Breast epithelium (tissue), 4 donors: ENCODE measurements at regions of chr3 and their contacts with region 1.

Region 1: DNA sequence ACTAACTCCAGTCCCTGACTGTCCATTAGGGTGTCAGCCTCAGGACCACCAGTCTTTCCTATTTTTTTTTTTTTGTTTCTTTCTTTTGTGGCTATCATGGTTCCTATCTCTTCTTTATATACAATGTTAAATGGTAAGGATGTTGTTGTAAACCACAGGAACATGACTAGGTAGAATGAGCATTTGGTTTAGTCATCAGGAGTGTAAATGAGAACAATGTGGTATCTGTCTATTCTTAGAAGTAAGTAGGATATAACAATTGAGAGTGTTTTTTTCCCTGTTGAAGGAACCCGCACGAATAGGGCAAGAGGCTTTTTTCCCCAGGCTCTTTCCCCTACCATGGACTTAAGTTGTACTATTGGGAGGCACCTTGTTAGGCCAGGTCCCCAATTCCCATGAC is 880.3 kb upstream of the GBE1 start:
- DNase-seq: no peak
- H3K4me3 ChIP-seq: no peak overlapping the region
- H3K27ac ChIP-seq: no peak overlapping the region
- H3K4me1 ChIP-seq: no peaks in the 10 kb centered on the region
- H3K27me3 ChIP-seq: no peaks in the 10 kb centered on the region
- CTCF ChIP-seq: no peak
- POLR2A ChIP-seq: no peak

Region 2: DNA sequence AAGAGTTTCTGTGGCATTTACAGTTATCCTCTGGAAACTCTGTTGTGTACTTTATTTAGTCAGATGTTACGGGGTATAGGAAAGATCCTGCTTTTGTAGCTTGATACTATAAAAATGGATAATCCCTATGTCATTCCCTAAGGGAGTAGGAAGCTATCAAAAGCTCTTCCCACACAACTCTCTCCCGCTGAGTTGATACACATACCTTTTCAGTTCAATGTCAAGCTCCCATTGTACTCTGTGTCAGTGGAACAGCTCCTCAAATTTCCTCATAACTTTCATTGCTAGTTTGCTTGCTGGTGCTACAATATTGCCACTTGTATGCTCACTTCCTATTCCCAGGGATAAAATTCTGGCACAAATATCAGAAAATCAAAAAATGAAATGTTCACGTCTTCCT is 13.0 kb after region 1 on chr3:
- intact Hi-C with region 1: loop called (anchors 1 kb)
- DNase-seq: no peak
- H3K4me3 ChIP-seq: no peak overlapping the region
- H3K27ac ChIP-seq: no peak overlapping the region
- H3K4me1 ChIP-seq: no peaks in the 10 kb centered on the region
- H3K27me3 ChIP-seq: no peaks in the 10 kb centered on the region
- CTCF ChIP-seq: no peak
- POLR2A ChIP-seq: no peak

Region 3: DNA sequence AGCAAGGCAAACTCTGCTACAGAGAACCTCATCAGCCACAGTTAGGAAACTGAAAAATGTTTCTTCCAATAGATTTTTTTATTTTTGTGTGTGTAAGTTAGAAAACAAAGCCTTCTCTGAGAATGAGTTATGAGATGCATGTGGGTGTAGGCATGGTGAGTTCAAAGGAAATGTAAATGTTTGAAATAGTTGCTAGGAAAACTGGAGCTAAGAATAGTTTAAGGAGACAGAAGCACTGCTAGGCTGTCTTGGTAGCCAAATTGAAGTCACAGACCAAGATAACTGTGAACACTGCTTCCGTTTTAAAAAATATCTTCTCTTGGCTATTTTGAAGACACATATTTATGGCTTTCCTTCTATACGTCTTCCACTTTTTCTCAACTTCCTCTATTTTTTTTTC is 815.9 kb after region 1 on chr3:
- intact Hi-C with region 1: no loop called
- DNase-seq: no peak
- H3K4me3 ChIP-seq: no peak overlapping the region
- H3K27ac ChIP-seq: no peak overlapping the region
- H3K4me1 ChIP-seq: no peaks in the 10 kb centered on the region
- H3K27me3 ChIP-seq: no peaks in the 10 kb centered on the region
- CTCF ChIP-seq: no peak
- POLR2A ChIP-seq: no peak